Motor neuron (in vitro differentiated cells): ENCODE measurements at regions of chr5 and their contacts with region 1.

Region 1: DNA sequence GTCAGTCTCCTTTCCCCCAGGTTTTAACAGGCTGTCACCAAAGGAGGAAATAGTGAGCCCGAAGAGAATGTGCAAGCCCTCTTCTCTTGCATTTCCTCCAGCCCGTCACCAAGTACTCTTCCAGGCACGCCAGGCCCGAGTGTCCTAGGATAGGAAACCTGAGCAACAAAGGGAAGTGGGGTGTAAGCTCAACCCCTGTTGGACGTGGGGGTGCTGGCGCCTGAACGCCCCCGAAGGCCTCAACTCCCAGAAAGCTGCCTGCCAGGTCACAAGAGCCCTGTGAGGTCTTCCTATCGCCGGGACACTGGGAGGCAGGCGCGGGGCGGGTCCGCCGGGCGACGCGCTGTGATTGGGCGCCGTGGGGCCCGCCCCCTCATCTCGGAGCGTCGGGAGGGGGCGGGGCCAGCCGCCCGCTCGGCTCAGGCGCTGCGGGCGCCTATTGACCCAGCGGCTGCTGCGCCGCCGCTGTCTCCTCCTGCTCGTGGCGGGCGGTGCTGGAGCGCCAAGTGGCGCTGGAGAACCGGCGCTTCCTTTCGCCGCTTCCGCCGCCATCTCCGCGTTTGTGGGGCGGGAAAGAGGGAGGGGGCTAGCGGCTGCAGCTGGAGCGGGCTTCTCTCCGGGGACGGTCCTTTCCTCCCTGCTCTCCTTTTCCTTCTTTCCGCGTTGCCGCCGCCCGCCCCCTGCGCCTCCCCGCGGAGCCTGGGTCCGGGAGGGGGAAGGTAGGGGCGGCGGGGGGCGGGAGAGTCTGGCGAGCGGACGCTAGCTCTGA is 572 bp upstream of the MAN2A1 start:
- ATAC-seq: peak; percentile 77 to 90 (median 87)
- H3K4me3 ChIP-seq: peak overlapping the region; percentile 61 to 83 (median 72)
- H3K27ac ChIP-seq: peak overlapping the region; percentile 73 to 88
- H3K4me1 ChIP-seq: peaks cover 8 to 11% of the 10 kb centered on the region in 2 donors

Region 2: DNA sequence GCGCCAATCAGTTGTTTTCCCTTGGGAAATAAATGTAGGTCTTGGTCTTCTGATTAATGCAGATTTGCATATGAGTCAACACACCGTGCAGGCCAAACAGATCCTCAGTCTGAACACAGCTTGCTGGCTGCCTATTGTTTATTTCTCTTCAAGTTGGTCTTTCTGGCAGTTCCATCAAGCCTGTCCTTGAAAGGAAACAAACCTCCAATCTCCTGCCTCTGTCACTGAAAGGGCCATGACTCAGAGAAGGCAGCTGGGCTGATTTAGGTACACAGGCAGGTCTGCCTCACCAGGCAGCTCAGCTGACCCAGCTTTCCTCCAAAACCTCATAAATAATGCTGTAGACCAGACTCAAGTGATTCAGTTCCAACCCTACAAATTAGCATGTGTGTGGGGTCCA is 176.5 kb after region 1 on chr5:
- in situ Hi-C with region 1: loop called in 1 of 9 experiments (anchors 25 kb)
- ATAC-seq: peak; percentile 80 to 96 (median 94)
- H3K4me3 ChIP-seq: no peak overlapping the region
- H3K27ac ChIP-seq: no peak overlapping the region
- H3K4me1 ChIP-seq: peaks cover 0 to 9% of the 10 kb centered on the region in 2 donors

Region 3: GRCh38 chr5:110045158-110045557 is 356.0 kb after region 1 on chr5:
- in situ Hi-C with region 1: loop called in 1 of 9 experiments (anchors 25 kb)
- ATAC-seq: no peak
- H3K4me3 ChIP-seq: no peak overlapping the region
- H3K27ac ChIP-seq: no peak overlapping the region
- H3K4me1 ChIP-seq: peaks cover 6 to 10% of the 10 kb centered on the region in 2 donors